ENCODE measurements at regions of chr12 and their contacts with region 1.

Region 1: DNA sequence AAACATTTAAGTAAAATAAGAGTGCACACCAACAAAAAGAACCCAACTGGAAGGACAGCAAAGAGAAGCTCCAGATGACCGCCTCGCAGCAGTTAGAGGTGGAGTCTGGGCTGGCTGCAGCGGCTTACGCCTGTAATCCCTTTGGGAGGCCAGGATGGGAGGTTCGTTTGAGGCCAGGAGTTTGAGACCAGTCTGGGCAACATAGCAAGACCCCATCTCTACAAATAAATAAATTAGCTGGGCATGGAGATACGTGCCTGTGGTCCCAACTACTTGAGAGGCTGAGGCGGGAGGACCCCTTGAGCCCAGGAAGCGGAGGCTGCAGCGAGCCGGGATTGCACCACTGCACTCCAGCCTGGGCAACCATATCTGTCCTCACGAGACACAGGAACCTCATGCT is 15.2 kb downstream of the LRCOL1 start:
- DNase-seq: no peak
- H3K4me3 ChIP-seq: no peak overlapping the region
- H3K27ac ChIP-seq: no peak overlapping the region
- H3K27me3 ChIP-seq: peaks cover 2% of the 10 kb centered on the region
- CTCF ChIP-seq: no peak

Region 2: DNA sequence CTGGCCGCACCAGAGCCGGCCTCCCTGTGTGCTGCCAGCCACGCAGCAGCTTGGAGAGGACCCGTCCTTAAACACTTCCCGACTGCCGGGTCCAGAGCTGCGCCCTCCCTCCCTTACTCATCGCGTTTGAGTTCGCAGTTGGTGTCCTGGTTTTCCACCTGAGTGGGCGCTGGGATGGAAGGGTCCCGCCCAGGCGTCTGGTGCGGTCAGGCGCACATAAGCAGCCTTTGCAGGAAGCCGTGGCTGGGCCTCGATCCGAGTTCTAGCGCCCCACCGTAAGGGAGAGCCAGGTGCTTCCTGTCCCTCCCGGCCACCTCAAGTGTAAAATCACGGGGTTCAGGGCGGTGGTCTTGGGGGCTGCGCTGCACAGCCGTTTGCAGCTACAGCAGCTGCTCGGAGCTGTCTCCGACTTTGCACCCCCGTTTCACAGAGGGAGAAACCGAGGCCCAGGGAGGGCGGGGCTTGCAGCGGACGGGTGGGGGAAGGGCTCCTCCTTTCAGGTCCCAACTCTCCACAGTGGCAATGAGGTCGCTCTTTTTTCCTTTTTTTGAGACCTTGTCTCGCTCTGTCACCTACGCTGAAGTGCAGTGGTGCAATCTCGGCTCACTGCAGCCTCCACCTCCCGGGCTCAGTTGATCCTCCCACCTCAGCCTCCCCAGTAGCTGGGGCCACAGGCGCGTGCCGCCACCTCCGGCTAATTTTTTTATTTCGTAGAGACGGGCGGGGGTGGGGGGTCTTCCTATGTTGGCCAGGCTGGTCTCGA is 36.1 kb before region 1 on chr12:
- CTCF ChIA-PET with region 1: interaction called, 10 read pairs
- POLR2A ChIA-PET with region 1: no interaction called
- DNase-seq: no peak
- H3K4me3 ChIP-seq: peak overlapping the region; percentile 69
- H3K27ac ChIP-seq: no peak overlapping the region
- H3K27me3 ChIP-seq: no peaks in the 10 kb centered on the region
- CTCF ChIP-seq: no peak